ENCODE measurements at regions of chrX and their contacts with region 1.

Region 1: DNA sequence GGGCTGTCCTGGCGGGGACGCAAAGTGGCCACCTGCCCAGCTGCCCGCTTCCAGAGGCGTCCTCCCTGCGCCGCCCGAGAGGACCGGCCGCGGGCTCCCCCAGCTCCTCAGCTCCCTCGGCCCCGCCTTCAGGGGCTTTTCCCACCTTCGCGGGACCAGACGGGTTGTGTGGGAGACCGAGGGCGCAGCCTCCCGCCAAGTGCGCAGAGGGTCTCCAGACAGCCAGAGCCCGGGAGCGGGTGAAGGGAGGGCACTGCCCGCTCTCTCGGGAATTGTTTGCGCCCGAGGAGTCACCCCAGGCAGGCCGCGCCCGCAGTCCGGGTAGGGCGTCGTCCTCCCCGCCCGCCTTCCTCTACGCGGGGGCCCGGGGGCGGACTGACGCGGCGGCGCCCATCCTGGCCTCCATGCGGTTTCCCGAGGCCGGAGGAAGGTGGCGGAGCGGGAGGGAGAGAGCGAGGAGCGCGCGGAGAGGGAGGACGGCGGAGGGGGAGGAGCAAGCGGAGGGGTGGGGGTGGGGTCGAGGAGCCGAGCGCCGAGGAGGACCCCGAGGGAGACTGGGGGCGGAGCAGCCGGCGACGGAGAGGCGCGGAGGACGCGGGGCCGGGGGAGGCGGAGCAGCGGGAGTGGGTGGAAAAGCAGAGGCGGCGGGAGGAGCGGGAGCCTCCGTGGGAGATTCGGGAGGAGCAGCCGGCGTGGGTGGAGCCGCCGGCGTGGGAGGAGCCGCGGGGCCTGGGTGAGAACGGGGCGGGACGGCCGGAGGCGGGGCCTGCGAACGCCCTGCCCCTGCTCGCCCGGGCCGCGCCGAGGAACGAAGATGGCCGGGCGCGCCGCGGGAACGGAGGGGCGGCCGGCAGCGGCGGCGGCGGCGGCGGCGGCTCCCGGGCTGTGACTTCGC is 47.6 kb downstream of the CLDN34 start:
- DNase-seq: peak; percentile 82 to 87
- ATAC-seq: peak; percentile 92

Region 2: GRCh38 chrX:9626379-9626778 is 388.3 kb before region 1 on chrX:
- intact Hi-C with region 1: no loop called
- DNase-seq: no peak
- ATAC-seq: no peak

Region 3: GRCh38 chrX:10106806-10107205 is 92.1 kb after region 1 on chrX:
- intact Hi-C with region 1: loop called in 1 of 2 experiments (anchors 5 kb)
- DNase-seq: no peak
- ATAC-seq: no peak

Region 4: DNA sequence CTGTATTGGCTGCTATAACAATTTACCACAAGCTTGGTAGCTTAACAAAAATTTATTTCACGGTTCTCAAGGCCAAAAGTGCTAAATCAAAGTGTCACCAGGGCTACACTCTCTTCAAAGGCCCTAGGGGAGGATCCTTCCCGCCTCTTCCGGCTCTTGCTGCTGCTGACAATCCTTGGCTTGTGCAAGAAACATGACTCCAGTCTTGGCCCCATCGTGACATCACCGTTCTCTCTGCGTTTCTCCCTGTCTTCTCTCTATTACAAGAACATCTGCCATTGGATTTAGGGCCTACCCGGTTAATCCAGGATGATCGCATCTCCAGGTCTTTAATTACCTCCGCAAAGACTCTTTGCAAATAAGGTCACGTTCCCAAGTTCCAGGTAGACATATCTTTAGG is 131.6 kb after region 1 on chrX:
- intact Hi-C with region 1: no loop called
- DNase-seq: no peak
- ATAC-seq: no peak

Region 5: DNA sequence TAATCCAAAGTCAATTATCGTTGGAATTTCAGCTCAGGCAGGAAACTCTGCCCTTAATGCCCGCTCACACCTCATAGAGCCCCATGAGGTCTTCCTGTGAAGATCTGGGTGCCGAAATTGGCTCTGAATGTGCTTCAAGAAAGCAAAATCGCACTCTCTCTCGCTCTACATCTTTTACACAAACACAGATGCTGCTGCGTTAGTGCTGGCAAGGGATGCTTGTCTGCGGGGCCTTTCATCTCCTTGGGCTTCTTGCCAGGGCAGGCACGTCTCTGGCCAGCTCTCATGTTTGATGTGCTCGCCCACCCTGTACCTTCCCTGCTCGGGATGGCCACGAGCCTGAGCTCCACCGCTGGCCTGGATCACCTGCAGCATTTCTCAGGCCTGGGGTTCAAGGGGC is 208.6 kb after region 1 on chrX:
- intact Hi-C with region 1: no loop called
- DNase-seq: no peak
- ATAC-seq: no peak

Region 6: GRCh38 chrX:10235851-10236250 is 221.1 kb after region 1 on chrX:
- intact Hi-C with region 1: no loop called
- DNase-seq: no peak
- ATAC-seq: no peak

Measured in left colon (tissue), 2 donors.